ENCODE measurements at regions of chr10 and their contacts with region 1.

Region 1: DNA sequence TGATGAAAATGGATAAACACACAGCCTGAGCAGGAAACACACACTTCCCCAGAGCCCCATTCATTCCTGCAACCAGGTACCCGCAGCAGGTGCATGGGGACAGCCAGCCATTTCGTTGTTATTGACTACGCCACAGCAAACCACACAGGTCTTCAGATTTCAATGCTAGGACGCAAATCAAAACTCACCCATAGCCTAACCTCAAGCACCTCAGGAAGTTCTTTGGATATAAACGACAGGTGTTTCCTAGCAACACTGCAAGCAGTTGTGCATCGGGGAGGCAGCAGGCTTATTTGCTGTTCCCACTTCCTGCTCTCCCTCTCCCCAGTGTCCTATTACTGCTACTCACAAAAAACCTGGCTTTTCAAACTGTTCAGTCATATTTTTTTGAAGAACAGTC is 176.5 kb upstream of the FRMD4A start:
- DNase-seq: no peak
- ATAC-seq: no peak
- H3K4me3 ChIP-seq: no peak overlapping the region
- H3K27ac ChIP-seq: no peak overlapping the region
- H3K4me1 ChIP-seq: no peaks in the 10 kb centered on the region
- H3K27me3 ChIP-seq: no peaks in the 10 kb centered on the region
- CTCF ChIP-seq: no peak

Region 2: GRCh38 chr10:13673156-13673555 is 834.0 kb before region 1 on chr10:
- intact Hi-C with region 1: no loop called
- DNase-seq: no peak
- ATAC-seq: no peak
- H3K4me3 ChIP-seq: no peak overlapping the region
- H3K27ac ChIP-seq: no peak overlapping the region
- H3K4me1 ChIP-seq: no peaks in the 10 kb centered on the region
- H3K27me3 ChIP-seq: no peaks in the 10 kb centered on the region
- CTCF ChIP-seq: no peak

Region 3: GRCh38 chr10:14822879-14823755 is 315.9 kb after region 1 on chr10:
- intact Hi-C with region 1: loop called in 1 of 2 experiments (anchors 10 kb)
- DNase-seq: no peak
- ATAC-seq: no peak
- H3K4me3 ChIP-seq: no peak overlapping the region
- H3K27ac ChIP-seq: no peak overlapping the region
- H3K4me1 ChIP-seq: no peaks in the 10 kb centered on the region
- H3K27me3 ChIP-seq: no peaks in the 10 kb centered on the region
- CTCF ChIP-seq: peak; percentile 31

Region 4: GRCh38 chr10:14971867-14972448 is 464.8 kb after region 1 on chr10:
- intact Hi-C with region 1: loop called in 1 of 2 experiments (anchors 10 kb)
- DNase-seq: peak in 1 of 2 donors; percentile 23
- ATAC-seq: no peak
- H3K4me3 ChIP-seq: no peak overlapping the region
- H3K27ac ChIP-seq: no peak overlapping the region
- H3K4me1 ChIP-seq: no peaks in the 10 kb centered on the region
- H3K27me3 ChIP-seq: peaks cover 0 to 4% (median 0%) of the 10 kb centered on the region in 3 donors
- CTCF ChIP-seq: peak; percentile 48

Region 5: DNA sequence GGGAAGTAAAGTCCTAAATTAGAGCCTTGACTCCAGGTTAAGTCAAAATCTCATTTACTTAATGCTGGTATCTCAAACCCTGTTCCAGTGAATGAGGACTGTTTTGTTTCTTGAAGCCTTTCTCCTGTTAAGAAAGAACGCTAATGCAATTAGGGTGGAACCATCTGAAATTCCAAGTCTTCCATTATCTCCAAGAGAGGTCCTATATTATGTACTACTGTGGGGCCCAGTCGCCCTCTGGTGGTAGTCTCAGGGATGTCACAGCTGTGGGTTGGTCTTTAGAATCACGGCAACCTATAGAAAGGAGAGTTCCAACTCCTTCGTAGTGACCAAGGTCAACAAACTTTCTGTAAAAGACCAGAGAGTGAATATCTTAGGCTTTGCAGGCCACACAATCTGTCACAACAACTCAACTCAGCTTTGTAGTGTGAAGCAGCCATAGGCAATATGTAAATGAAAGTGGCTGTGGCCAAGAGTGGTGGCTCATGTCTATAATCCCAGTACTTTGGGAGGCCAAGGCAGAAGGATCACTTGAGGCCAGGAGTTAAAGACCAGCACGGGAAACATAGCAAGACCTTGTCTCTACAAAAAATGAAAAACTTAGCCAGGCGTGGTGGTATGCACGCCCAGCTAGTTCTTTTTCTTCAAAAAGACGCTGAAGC is 599.3 kb after region 1 on chr10:
- intact Hi-C with region 1: loop called (anchors 10 kb)
- DNase-seq: peak; percentile 62 to 77
- ATAC-seq: peak; percentile 75 to 96 (median 85)
- H3K4me3 ChIP-seq: no peak overlapping the region
- H3K27ac ChIP-seq: no peak overlapping the region
- H3K4me1 ChIP-seq: no peaks in the 10 kb centered on the region
- H3K27me3 ChIP-seq: no peaks in the 10 kb centered on the region
- CTCF ChIP-seq: peak; percentile 90